ENCODE measurements at regions of chr2 and their contacts with region 1.

Region 1: GRCh38 chr2:200901459-200902072 is 12.4 kb downstream of the NIF3L1 start:
- DNase-seq: peak; percentile 90
- ATAC-seq: peak; percentile 100
- H3K4me3 Mint-ChIP-seq: no peak overlapping the region
- H3K27ac Mint-ChIP-seq: peak overlapping the region; percentile 72
- H3K4me1 Mint-ChIP-seq: peaks cover 19% of the 10 kb centered on the region
- H3K27me3 Mint-ChIP-seq: no peaks in the 10 kb centered on the region
- CTCF ChIP-seq: peak; percentile 95

Region 2: GRCh38 chr2:200798514-200798913 is 103.1 kb before region 1 on chr2:
- CTCF ChIA-PET with region 1: no interaction called
- POLR2A ChIA-PET with region 1: no interaction called
- intact Hi-C with region 1: no loop called
- DNase-seq: no peak
- ATAC-seq: peak; percentile 81
- H3K4me3 Mint-ChIP-seq: no peak overlapping the region
- H3K27ac Mint-ChIP-seq: no peak overlapping the region
- H3K4me1 Mint-ChIP-seq: peaks cover 8% of the 10 kb centered on the region
- H3K27me3 Mint-ChIP-seq: peaks cover 4% of the 10 kb centered on the region
- CTCF ChIP-seq: no peak

Region 3: GRCh38 chr2:200839513-200839912 is 62.1 kb before region 1 on chr2:
- CTCF ChIA-PET with region 1: no interaction called
- POLR2A ChIA-PET with region 1: no interaction called
- intact Hi-C with region 1: no loop called
- DNase-seq: no peak
- ATAC-seq: no peak
- H3K4me3 Mint-ChIP-seq: no peak overlapping the region
- H3K27ac Mint-ChIP-seq: no peak overlapping the region
- H3K4me1 Mint-ChIP-seq: no peaks in the 10 kb centered on the region
- H3K27me3 Mint-ChIP-seq: no peaks in the 10 kb centered on the region
- CTCF ChIP-seq: no peak

Region 4: GRCh38 chr2:201064797-201065329 is 163.3 kb after region 1 on chr2:
- CTCF ChIA-PET with region 1: interaction called, 70 read pairs
- POLR2A ChIA-PET with region 1: interaction called, 3 read pairs
- intact Hi-C with region 1: loop called (anchors 5 kb)
- DNase-seq: no peak
- ATAC-seq: no peak
- H3K4me3 Mint-ChIP-seq: no peak overlapping the region
- H3K27ac Mint-ChIP-seq: no peak overlapping the region
- H3K4me1 Mint-ChIP-seq: peaks cover 63% of the 10 kb centered on the region
- H3K27me3 Mint-ChIP-seq: peaks cover 1% of the 10 kb centered on the region
- CTCF ChIP-seq: no peak